Mammary epithelial cell (primary cell): ENCODE measurements at regions of chr6 and their contacts with region 1.

Region 1: DNA sequence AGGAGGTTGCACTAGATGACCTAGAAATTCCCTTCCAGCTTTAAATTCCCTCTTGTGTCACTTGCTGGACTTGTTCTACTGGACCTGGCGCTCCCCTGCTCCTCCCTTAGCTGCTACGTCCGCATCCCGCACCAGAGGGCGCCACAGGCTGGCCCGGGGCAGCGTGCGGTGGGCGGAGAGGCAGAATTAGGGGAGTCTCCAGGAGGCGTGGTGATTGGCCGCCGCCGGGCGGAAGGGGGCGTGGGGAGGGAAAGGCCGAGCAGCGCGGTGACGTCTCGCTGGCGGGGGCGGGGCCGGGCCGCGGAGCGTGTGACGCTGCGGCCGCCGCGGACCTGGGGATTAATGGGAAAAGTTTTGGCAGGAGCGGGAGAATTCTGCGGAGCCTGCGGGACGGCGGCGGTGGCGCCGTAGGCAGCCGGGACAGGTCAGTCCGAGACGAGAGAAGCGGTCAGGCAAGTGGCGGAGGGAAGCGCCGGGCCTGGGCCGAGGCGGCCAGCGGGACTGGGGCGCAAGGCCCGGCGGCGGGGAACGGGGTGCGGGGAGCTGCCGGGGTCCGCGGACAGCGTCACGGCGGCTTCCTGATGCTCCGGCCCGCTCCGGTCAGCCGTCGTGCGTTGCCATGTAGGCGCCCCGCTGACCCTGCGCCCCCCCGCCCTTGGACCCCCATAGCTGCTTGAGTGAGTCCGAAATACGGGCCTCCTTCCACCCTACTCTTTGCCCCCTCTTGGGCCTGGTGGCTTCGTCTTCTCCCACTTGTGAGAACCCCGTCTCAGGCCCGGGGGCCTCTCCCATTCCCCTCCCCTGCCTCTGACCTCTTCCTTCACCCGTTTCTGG is at the start of gene PPARD:
- DNase-seq: peak; percentile 96
- H3K4me3 ChIP-seq: peak within 1 kb of the TSS; percentile 63 to 73 (median 68)
- H3K27ac ChIP-seq: peak within 1 kb of the TSS; percentile 77
- H3K4me1 ChIP-seq: peaks cover 22% of the 10 kb centered on the region
- H3K27me3 ChIP-seq: no peaks in the 10 kb centered on the region
- CTCF ChIP-seq: peak; percentile 92 to 99
- total RNA-seq, gene PPARD: 6.8 to 47.1 TPM

Region 2: GRCh38 chr6:35377002-35377401 is 34.5 kb after region 1 on chr6:
- CTCF ChIA-PET with region 1: no interaction called
- dilution Hi-C with region 1: loop called (anchors 5 kb)
- in situ Hi-C with region 1: no loop called
- intact Hi-C with region 1: no loop called
- DNase-seq: no peak
- H3K4me3 ChIP-seq: no peak overlapping the region
- H3K27ac ChIP-seq: no peak overlapping the region
- H3K4me1 ChIP-seq: no peaks in the 10 kb centered on the region
- H3K27me3 ChIP-seq: no peaks in the 10 kb centered on the region
- CTCF ChIP-seq: no peak

Region 3: DNA sequence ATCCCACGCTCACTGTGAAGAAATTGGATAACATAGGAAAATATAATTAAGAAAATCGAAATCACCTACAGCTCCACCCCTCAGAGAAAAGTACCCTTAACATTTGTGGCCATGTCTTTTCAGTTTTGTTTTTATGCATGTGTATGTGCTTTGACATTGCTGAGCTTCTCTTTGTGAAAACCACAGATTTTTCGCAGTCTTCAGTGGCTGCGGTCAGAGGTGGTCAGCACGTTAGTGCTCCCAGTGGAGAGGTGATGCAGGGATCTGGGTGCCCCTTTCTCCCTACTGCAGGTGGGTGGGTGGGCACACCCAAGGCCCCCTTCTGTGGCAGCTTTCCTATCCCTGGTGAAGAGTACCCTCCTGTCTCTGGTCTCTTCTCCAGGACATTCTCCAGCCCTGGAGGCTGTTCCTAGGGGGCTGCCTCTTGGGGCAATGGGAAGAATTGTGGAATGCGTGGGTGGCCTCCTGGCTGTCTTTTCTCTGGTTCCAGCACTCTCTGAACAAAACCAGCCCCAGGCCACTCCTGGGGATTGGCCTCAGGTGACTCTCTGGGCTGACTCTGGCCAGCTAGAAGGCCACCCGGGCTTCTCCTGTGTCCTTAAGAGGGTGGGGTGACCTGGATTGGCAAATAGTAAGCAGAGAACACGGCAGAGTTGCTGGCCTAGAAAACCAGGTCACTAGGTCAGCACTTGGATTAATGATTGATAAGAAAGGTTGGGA is 59.8 kb after region 1 on chr6:
- CTCF ChIA-PET with region 1: no interaction called
- dilution Hi-C with region 1: no loop called
- in situ Hi-C with region 1: loop called in 1 of 2 experiments (anchors 5 kb)
- intact Hi-C with region 1: loop called (anchors 1 kb)
- DNase-seq: no peak
- H3K4me3 ChIP-seq: no peak overlapping the region
- H3K27ac ChIP-seq: peak overlapping the region; percentile 97
- H3K4me1 ChIP-seq: peaks cover 39% of the 10 kb centered on the region
- H3K27me3 ChIP-seq: no peaks in the 10 kb centered on the region
- CTCF ChIP-seq: no peak

Region 4: GRCh38 chr6:35443341-35444030 is 101.0 kb after region 1 on chr6:
- CTCF ChIA-PET with region 1: no interaction called
- dilution Hi-C with region 1: loop called (anchors 5 kb)
- in situ Hi-C with region 1: loop called in 1 of 2 experiments (anchors 10 kb)
- intact Hi-C with region 1: no loop called
- DNase-seq: no peak
- H3K4me3 ChIP-seq: no peak overlapping the region
- H3K27ac ChIP-seq: no peak overlapping the region
- H3K4me1 ChIP-seq: peaks cover 9% of the 10 kb centered on the region
- H3K27me3 ChIP-seq: no peaks in the 10 kb centered on the region
- CTCF ChIP-seq: no peak

Region 5: DNA sequence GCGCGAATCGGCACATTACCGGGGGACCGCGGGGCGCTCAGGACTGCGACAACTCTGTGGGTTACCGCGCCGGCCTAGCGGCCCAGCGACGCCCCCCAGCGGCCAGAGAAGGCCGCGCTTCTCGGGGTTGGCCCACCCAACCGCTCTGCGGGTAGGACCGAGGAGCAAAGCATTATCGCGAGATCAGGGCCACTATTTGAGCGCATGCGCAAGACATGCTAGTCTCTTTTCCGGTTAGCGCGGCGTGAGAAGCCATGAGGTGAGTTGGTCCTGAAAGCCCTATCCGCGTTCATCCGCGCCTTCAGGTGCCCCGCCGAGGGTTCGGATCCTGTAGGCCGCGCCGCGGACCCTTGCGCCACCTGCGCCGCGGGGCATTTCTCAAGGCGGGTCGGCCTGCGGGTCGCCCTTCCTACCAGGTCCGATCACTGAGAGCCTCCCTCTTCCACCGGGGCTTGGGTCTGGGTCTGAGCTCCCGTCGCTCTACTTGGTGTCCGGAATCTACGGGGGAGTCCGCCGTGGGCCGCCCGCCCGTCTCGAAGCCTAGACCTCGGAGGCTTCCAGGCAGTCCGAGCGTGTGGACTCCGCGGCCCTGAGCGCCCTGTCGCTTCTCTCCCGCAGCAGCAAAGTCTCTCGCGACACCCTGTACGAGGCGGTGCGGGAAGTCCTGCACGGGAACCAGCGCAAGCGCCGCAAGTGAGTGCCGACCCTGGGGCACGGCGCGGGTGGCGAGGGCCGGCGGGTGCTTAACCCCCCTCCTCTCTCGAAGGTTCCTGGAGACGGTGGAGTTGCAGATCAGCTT is 125.9 kb after region 1 on chr6 and contains the start of gene RPL10A:
- CTCF ChIA-PET with region 1: no interaction called
- dilution Hi-C with region 1: no loop called
- in situ Hi-C with region 1: no loop called
- intact Hi-C with region 1: loop called (anchors 1 kb)
- DNase-seq: peak; percentile 93
- H3K4me3 ChIP-seq: peak within 1 kb of the TSS; percentile 87 to 98 (median 95)
- H3K27ac ChIP-seq: peak within 1 kb of the TSS; percentile 81
- H3K4me1 ChIP-seq: peaks cover 19% of the 10 kb centered on the region
- H3K27me3 ChIP-seq: no peaks in the 10 kb centered on the region
- CTCF ChIP-seq: peak; percentile 88 to 98
- total RNA-seq, gene RPL10A: 961 to 1,334 TPM

Region 6: GRCh38 chr6:35552285-35552917 is 209.9 kb after region 1 on chr6:
- CTCF ChIA-PET with region 1: interaction called, 37 read pairs
- dilution Hi-C with region 1: no loop called
- in situ Hi-C with region 1: no loop called
- intact Hi-C with region 1: no loop called
- DNase-seq: peak; percentile 29
- H3K4me3 ChIP-seq: no peak overlapping the region
- H3K27ac ChIP-seq: no peak overlapping the region
- H3K4me1 ChIP-seq: no peaks in the 10 kb centered on the region
- H3K27me3 ChIP-seq: no peaks in the 10 kb centered on the region
- CTCF ChIP-seq: peak; percentile 89 to 99

Region 7: DNA sequence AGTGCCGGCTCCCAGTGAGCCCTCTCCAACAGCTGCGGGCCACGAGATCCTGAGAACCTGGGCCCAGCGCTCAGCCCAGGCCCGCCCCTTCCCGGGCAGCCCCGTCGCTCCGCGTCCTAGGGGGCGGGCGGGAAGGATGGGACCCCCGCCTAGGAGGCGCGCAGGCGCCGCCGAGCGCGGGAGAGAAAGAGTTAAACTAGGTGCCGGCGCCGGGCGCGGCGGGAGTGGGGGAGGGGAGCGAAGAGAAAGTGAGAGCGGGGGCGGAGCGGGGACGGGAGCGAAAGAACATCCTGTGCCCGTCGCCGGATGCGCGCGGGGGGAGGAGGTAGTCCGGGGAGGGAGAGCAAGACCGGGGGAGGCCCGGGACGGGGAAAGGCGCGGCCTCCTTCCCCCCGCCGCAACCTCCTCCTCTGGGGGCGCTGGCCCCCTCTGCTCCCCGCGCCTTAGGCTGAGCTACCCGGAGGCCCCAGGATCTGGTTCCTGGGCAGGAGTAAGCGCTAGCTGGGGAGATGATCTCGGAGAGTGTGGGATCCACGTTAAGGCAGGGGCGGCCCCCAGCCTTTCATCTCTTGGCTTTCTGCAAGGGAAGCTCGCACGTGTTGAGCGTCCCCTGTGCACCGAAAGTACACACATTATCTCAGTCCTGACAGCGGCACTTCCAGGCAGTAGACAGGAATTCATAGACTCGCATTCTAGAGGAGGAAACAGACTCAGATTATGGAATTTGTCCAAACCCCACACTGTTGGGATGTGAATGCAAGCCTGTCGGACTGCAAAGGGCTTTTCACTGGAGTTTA is 389.5 kb after region 1 on chr6:
- CTCF ChIA-PET with region 1: no interaction called
- dilution Hi-C with region 1: no loop called
- in situ Hi-C with region 1: no loop called
- intact Hi-C with region 1: loop called (anchors 5 kb)
- DNase-seq: peak; percentile 87
- H3K4me3 ChIP-seq: peak overlapping the region; percentile 45 to 54 (median 48)
- H3K27ac ChIP-seq: peak overlapping the region; percentile 83
- H3K4me1 ChIP-seq: peaks cover 69% of the 10 kb centered on the region
- H3K27me3 ChIP-seq: no peaks in the 10 kb centered on the region
- CTCF ChIP-seq: no peak